ENCODE measurements at regions of chr4 and their contacts with region 1.

Region 1: GRCh38 chr4:70505151-70505748 is 13.1 kb upstream of the AMTN start:
- DNase-seq: peak; percentile 26
- H3K4me3 ChIP-seq: no peak overlapping the region
- H3K27ac ChIP-seq: no peak overlapping the region
- H3K4me1 ChIP-seq: no peaks in the 10 kb centered on the region
- H3K27me3 ChIP-seq: peaks cover 2% of the 10 kb centered on the region
- CTCF ChIP-seq: peak; percentile 97 to 99

Region 2: GRCh38 chr4:69896530-69897116 is 608.6 kb before region 1 on chr4:
- CTCF ChIA-PET with region 1: no interaction called
- dilution Hi-C with region 1: no loop called
- in situ Hi-C with region 1: no loop called
- intact Hi-C with region 1: loop called (anchors 1 kb)
- DNase-seq: no peak
- H3K4me3 ChIP-seq: no peak overlapping the region
- H3K27ac ChIP-seq: no peak overlapping the region
- H3K4me1 ChIP-seq: no peaks in the 10 kb centered on the region
- H3K27me3 ChIP-seq: peaks cover 2% of the 10 kb centered on the region
- CTCF ChIP-seq: peak; percentile 44 to 60

Region 3: GRCh38 chr4:70183168-70183939 is 321.9 kb before region 1 on chr4:
- CTCF ChIA-PET with region 1: no interaction called
- dilution Hi-C with region 1: no loop called
- in situ Hi-C with region 1: no loop called
- intact Hi-C with region 1: loop called (anchors 2 kb)
- DNase-seq: peak; percentile 10
- H3K4me3 ChIP-seq: no peak overlapping the region
- H3K27ac ChIP-seq: no peak overlapping the region
- H3K4me1 ChIP-seq: no peaks in the 10 kb centered on the region
- H3K27me3 ChIP-seq: peaks cover 4% of the 10 kb centered on the region
- CTCF ChIP-seq: peak; percentile 83 to 84

Region 4: DNA sequence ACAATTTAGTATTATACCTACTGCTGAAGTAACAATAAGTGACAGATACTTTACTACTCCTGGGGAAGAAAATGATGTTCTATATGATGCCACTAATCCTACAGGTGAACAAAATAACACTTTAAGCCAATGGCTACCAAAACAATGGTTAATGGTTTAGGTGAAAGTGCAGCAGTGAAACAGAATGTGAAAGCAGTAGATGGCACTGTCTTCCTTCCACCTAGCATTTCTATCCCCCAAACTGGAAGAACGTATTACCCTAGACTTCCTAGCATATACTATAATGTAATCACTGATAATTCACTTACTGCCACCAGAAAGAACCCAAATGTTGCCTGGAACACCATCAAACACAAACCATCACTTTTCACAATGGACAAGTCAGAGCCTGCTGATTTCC is 189.3 kb before region 1 on chr4:
- CTCF ChIA-PET with region 1: no interaction called
- dilution Hi-C with region 1: no loop called
- in situ Hi-C with region 1: no loop called
- intact Hi-C with region 1: loop called (anchors 1 kb)
- DNase-seq: no peak
- H3K4me3 ChIP-seq: no peak overlapping the region
- H3K27ac ChIP-seq: no peak overlapping the region
- H3K4me1 ChIP-seq: no peaks in the 10 kb centered on the region
- H3K27me3 ChIP-seq: peaks cover 1% of the 10 kb centered on the region
- CTCF ChIP-seq: peak in 1 of 2 donors; percentile 20

Region 5: GRCh38 chr4:70356185-70356584 is 149.1 kb before region 1 on chr4:
- CTCF ChIA-PET with region 1: no interaction called
- dilution Hi-C with region 1: no loop called
- in situ Hi-C with region 1: no loop called
- intact Hi-C with region 1: no loop called
- DNase-seq: peak; percentile 6
- H3K4me3 ChIP-seq: no peak overlapping the region
- H3K27ac ChIP-seq: no peak overlapping the region
- H3K4me1 ChIP-seq: no peaks in the 10 kb centered on the region
- H3K27me3 ChIP-seq: no peaks in the 10 kb centered on the region
- CTCF ChIP-seq: no peak

Region 6: DNA sequence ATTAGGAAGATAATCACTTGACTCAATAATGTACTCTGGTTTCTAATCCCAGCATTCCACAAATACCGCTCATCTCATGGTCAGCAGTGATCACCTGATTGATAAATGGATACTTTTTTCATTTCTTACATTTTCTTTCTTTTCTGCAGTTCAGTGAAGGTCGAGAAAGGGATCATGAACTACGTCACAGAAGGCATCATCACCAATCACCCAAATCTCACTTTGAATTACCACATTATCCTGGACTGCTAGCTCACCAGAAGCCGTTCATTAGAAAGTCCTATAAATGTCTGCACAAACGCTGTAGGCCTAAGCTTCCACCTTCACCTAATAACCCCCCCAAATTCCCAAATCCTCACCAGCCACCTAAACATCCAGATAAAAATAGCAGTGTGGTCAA is 24.6 kb before region 1 on chr4:
- CTCF ChIA-PET with region 1: no interaction called
- dilution Hi-C with region 1: no loop called
- in situ Hi-C with region 1: no loop called
- intact Hi-C with region 1: no loop called
- DNase-seq: no peak
- H3K4me3 ChIP-seq: no peak overlapping the region
- H3K27ac ChIP-seq: no peak overlapping the region
- H3K4me1 ChIP-seq: no peaks in the 10 kb centered on the region
- H3K27me3 ChIP-seq: peaks cover 3% of the 10 kb centered on the region
- CTCF ChIP-seq: no peak

Region 7: DNA sequence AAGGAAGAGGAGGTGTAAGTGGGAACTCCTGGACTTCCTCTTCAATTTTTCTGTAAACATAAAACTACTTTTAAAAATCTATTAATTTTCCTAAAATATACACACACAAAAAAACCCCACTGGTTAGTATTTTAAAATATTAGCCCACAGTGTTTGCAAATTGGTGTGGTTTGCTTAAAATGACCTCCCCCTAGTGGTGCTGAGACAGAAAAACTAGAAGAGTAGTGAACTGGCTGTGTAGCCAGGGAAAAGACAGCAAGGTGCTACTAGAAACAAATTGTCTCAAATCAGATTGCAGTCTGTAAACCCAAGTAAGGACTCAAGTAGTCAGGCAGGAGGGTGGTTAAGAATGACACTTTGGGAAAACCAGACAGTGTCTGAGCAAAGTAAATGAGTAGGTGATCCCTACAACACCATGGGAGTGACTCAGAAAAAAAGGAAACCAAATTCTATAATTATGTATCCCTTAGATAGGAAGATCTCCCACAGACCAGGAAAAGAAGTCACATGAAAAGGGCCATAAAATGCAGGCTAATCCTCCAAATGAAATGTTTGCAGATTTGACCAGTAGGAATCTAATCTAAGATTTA is 39.1 kb after region 1 on chr4:
- CTCF ChIA-PET with region 1: no interaction called
- dilution Hi-C with region 1: no loop called
- in situ Hi-C with region 1: no loop called
- intact Hi-C with region 1: loop called (anchors 5 kb)
- DNase-seq: peak; percentile 22
- H3K4me3 ChIP-seq: no peak overlapping the region
- H3K27ac ChIP-seq: no peak overlapping the region
- H3K4me1 ChIP-seq: no peaks in the 10 kb centered on the region
- H3K27me3 ChIP-seq: no peaks in the 10 kb centered on the region
- CTCF ChIP-seq: peak; percentile 59 to 75

Region 8: GRCh38 chr4:70559211-70559830 is 54.1 kb after region 1 on chr4:
- CTCF ChIA-PET with region 1: interaction called, 6 read pairs
- dilution Hi-C with region 1: no loop called
- in situ Hi-C with region 1: no loop called
- intact Hi-C with region 1: loop called (anchors 2 kb)
- DNase-seq: peak; percentile 34
- H3K4me3 ChIP-seq: no peak overlapping the region
- H3K27ac ChIP-seq: no peak overlapping the region
- H3K4me1 ChIP-seq: no peaks in the 10 kb centered on the region
- H3K27me3 ChIP-seq: no peaks in the 10 kb centered on the region
- CTCF ChIP-seq: peak; percentile 82 to 84